Activated CD4-positive, alpha-beta memory T cell treated with anti-CD3 and anti-CD28 coated beads for 36 hours (primary cell): ENCODE measurements at regions of chr12 and their contacts with region 1.

Region 1: DNA sequence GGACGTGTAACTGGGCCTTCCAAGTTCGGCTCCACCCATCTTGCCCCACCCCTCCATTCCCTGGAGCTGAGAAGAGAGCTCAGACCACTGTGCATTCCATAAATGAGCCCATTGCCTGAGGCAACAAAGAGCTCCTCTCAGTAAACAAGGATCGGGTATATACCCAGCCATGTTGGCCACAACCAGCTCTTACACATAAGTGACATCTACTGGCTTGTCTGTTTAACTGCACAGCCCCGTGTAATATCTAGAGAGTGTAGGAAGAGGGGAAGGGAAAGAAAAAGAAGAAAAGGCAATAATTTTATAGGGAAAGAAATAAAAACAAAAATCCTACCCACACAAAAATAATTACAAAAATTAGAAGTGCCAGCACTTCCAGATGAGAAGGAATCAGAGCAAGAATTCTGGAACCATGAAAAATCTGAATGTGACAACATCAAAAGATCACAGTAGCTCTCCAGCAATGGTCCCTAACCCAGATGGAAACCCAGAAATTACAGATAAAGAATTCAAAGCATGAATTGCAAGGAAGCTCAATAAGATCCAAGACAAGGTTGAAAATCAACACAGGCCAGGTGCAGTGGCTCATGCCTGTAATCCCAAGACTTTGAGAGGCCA is 308.1 kb downstream of the RPAP3 start:
- DNase-seq: peak; percentile 64
- H3K4me3 Mint-ChIP-seq: peak overlapping the region; percentile 45
- H3K27ac Mint-ChIP-seq: peak overlapping the region; percentile 100
- H3K4me1 Mint-ChIP-seq: peaks cover 89% of the 10 kb centered on the region
- H3K27me3 Mint-ChIP-seq: no peaks in the 10 kb centered on the region

Region 2: GRCh38 chr12:47071241-47071852 is 326.4 kb before region 1 on chr12:
- CTCF ChIA-PET with region 1: interaction called, 34 read pairs
- POLR2A ChIA-PET with region 1: no interaction called
- intact Hi-C with region 1: no loop called
- DNase-seq: no peak
- H3K4me3 Mint-ChIP-seq: no peak overlapping the region
- H3K27ac Mint-ChIP-seq: no peak overlapping the region
- H3K4me1 Mint-ChIP-seq: peaks cover 21% of the 10 kb centered on the region
- H3K27me3 Mint-ChIP-seq: no peaks in the 10 kb centered on the region

Region 3: DNA sequence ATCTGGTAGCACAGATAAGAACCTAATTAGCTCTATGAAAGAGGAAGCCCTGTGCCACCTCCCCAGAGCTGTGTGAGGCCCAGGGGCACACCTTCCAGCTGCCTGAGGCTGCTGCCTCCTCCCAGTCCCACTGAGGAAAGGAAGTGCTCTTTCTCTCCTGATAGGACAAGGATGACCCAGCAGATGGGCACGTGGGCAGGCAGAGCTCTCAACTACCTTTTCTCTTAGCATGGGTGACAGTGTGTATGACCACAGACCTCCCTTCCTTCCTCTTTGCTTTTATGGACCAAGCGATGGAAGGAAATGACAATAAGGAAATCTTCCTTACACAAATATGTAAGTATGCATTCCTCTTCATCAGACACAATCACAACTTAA is 190.4 kb before region 1 on chr12:
- CTCF ChIA-PET with region 1: interaction called, 28 read pairs
- POLR2A ChIA-PET with region 1: interaction called, 207 read pairs
- intact Hi-C with region 1: no loop called
- DNase-seq: peak; percentile 75
- H3K4me3 Mint-ChIP-seq: peak overlapping the region; percentile 85
- H3K27ac Mint-ChIP-seq: peak overlapping the region; percentile 96
- H3K4me1 Mint-ChIP-seq: peaks cover 80% of the 10 kb centered on the region
- H3K27me3 Mint-ChIP-seq: no peaks in the 10 kb centered on the region

Region 4: GRCh38 chr12:47307680-47308399 is 89.9 kb before region 1 on chr12:
- CTCF ChIA-PET with region 1: interaction called, 30 read pairs
- POLR2A ChIA-PET with region 1: interaction called, 4 read pairs
- intact Hi-C with region 1: loop called (anchors 1 kb)
- DNase-seq: peak; percentile 68
- H3K4me3 Mint-ChIP-seq: peak overlapping the region; percentile 82
- H3K27ac Mint-ChIP-seq: peak overlapping the region; percentile 90
- H3K4me1 Mint-ChIP-seq: peaks cover 75% of the 10 kb centered on the region
- H3K27me3 Mint-ChIP-seq: no peaks in the 10 kb centered on the region

Region 5: GRCh38 chr12:47383942-47384341 is 13.8 kb before region 1 on chr12:
- CTCF ChIA-PET with region 1: interaction called, 13 read pairs
- POLR2A ChIA-PET with region 1: interaction called, 4 read pairs
- intact Hi-C with region 1: loop called (anchors 1 kb)
- DNase-seq: no peak
- H3K4me3 Mint-ChIP-seq: no peak overlapping the region
- H3K27ac Mint-ChIP-seq: peak overlapping the region; percentile 85
- H3K4me1 Mint-ChIP-seq: peaks cover 73% of the 10 kb centered on the region
- H3K27me3 Mint-ChIP-seq: no peaks in the 10 kb centered on the region

Region 6: GRCh38 chr12:47433876-47434275 is 36.1 kb after region 1 on chr12:
- CTCF ChIA-PET with region 1: no interaction called
- POLR2A ChIA-PET with region 1: no interaction called
- intact Hi-C with region 1: no loop called
- DNase-seq: no peak
- H3K4me3 Mint-ChIP-seq: no peak overlapping the region
- H3K27ac Mint-ChIP-seq: no peak overlapping the region
- H3K4me1 Mint-ChIP-seq: no peaks in the 10 kb centered on the region
- H3K27me3 Mint-ChIP-seq: no peaks in the 10 kb centered on the region

Region 7: GRCh38 chr12:47882781-47883546 is 485.2 kb after region 1 on chr12:
- CTCF ChIA-PET with region 1: no interaction called
- POLR2A ChIA-PET with region 1: no interaction called
- intact Hi-C with region 1: loop called (anchors 10 kb)
- DNase-seq: peak; percentile 67
- H3K4me3 Mint-ChIP-seq: peak overlapping the region; percentile 89
- H3K27ac Mint-ChIP-seq: peak overlapping the region; percentile 97
- H3K4me1 Mint-ChIP-seq: peaks cover 88% of the 10 kb centered on the region
- H3K27me3 Mint-ChIP-seq: no peaks in the 10 kb centered on the region